Activated T-helper 1 cell treated with anti-CD3 and anti-CD28 coated beads, Interleukin-12 subunit alpha, Interleukin-12 subunit beta, Interleukin-2, Interleukin-4 antibody, amounts not matched to agents 30 ng/mL and 10 ng/mL and 1 ng/mL, durations not matched to agents 14 hours and 24 hours and 36 hours (primary cell): ENCODE measurements at regions of chr19 and their contacts with region 1.

Region 1: DNA sequence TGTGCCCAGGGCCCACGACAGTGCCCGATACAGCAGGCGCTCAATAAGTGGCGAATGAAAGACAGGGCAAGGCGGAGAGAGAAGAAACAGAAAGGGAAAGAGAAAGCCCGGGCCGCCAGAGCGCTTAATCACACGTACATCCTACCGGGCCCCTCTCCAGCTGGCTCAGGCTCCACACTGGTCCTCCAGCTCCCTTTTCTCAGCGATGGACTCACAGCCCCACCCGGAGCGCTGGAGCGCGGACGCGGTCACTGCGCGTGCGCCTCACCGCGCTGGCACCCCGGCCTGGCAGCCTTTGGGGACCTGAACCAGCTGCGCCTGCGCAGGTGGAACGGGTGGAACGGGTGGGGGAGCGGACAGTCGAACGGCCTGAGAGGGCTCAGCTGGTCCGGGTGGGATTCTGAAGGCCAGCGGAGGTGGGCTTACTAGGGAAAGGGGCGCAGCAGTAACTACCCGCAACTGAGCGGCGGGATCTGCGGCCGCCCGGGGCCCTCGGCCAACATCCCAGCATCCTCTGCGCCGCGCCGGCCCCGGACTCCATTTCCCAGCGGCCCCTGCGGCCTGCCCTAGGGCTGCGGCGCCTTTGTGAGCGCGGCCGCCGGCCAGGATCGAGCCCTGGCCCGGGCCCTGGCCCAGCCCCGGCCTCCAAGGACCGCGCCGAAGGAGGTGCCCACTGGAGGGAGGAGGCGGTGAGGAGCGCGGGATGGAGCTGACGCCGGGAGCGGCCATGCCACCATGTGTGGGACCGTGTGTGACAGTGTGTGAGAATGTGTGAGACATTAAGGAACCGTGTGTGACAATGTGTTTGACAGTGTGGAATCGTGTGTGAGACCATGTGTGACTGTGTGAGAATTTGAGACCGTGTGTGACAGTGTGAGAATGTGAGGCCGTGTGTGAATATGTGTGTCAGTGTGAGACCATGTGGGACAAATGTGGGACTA is at the start of gene ZNF583:
- DNase-seq: peak; percentile 86
- H3K4me3 Mint-ChIP-seq: peak within 1 kb of the TSS; percentile 93
- H3K27ac Mint-ChIP-seq: peak within 1 kb of the TSS; percentile 96
- H3K4me1 Mint-ChIP-seq: peaks cover 23% of the 10 kb centered on the region
- H3K27me3 Mint-ChIP-seq: no peaks in the 10 kb centered on the region
- total RNA-seq, gene ZNF583: 1.4 and 2.1 TPM in 2 replicates

Region 2: GRCh38 chr19:56140583-56141416 is 263.2 kb before region 1 on chr19 and contains the start of gene ZNF444:
- intact Hi-C with region 1: loop called (anchors 1 kb)
- DNase-seq: peak; percentile 99
- H3K4me3 Mint-ChIP-seq: peak within 1 kb of the TSS; percentile 82
- H3K27ac Mint-ChIP-seq: peak within 1 kb of the TSS; percentile 84
- H3K4me1 Mint-ChIP-seq: peaks cover 37% of the 10 kb centered on the region
- H3K27me3 Mint-ChIP-seq: no peaks in the 10 kb centered on the region
- total RNA-seq, gene ZNF444: 33.8 and 36.5 TPM in 2 replicates

Region 3: GRCh38 chr19:56393119-56394012 is 10.7 kb before region 1 on chr19 and contains the start of gene ZNF582:
- intact Hi-C with region 1: loop called (anchors 1 kb)
- DNase-seq: peak; percentile 82
- H3K4me3 Mint-ChIP-seq: peak within 1 kb of the TSS; percentile 94
- H3K27ac Mint-ChIP-seq: peak within 1 kb of the TSS; percentile 90
- H3K4me1 Mint-ChIP-seq: peaks cover 7% of the 10 kb centered on the region
- H3K27me3 Mint-ChIP-seq: peaks cover 1% of the 10 kb centered on the region
- total RNA-seq, gene ZNF582: 1.2 and 1.3 TPM in 2 replicates

Region 4: GRCh38 chr19:56567274-56568120 is 163.5 kb after region 1 on chr19 and contains the start of gene ZNF470:
- intact Hi-C with region 1: loop called (anchors 1 kb)
- DNase-seq: peak; percentile 82
- H3K4me3 Mint-ChIP-seq: peak within 1 kb of the TSS; percentile 87
- H3K27ac Mint-ChIP-seq: peak within 1 kb of the TSS; percentile 89
- H3K4me1 Mint-ChIP-seq: no peaks in the 10 kb centered on the region
- H3K27me3 Mint-ChIP-seq: no peaks in the 10 kb centered on the region
- total RNA-seq, gene ZNF470: 1.2 and 2.4 TPM in 2 replicates